Naive thymus-derived CD4-positive, alpha-beta T cell (primary cell): ENCODE measurements at regions of chr6 and their contacts with region 1.

Region 1: DNA sequence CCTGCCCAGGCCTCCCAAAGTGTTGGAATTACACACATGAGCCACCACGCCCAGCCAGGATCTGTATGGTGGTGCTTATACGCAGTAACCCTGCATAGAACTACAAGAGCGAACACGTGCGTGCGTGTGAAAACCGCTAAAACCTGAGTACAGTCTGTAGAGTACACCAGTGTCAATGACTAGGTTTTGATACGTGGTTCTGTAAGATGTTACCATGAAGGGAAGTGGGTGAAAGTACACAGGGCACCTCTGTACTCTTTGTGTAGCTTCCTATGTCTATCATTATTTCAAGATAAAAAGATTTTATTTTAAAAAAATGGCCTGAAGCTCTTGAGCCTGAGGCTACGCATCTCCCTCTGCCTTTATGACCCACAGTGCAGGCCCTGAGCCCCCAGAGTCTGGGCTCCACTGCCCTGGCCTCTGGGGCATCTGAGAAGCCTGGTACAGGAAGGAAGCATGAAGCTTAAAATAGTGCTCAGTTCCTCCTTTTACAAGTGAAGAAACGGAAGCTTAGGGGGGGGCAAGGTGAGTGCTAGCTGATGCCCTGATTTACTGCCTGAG is 21.6 kb downstream of the LY86 start:
- DNase-seq: peak in 7 of 9 donors; percentile 70 to 88 (median 81)
- ATAC-seq: peak; percentile 84
- H3K4me3 ChIP-seq: peak overlapping the region; percentile 25
- H3K4me3 Mint-ChIP-seq: peak overlapping the region; percentile 29 to 83 (median 72)
- H3K27ac ChIP-seq: peak overlapping the region; percentile 65
- H3K27ac Mint-ChIP-seq: peak overlapping the region; percentile 81 to 100 (median 96)
- H3K4me1 ChIP-seq: peaks cover 51 to 61% of the 10 kb centered on the region in 2 donors
- H3K4me1 Mint-ChIP-seq: peaks cover 45 to 86% (median 68%) of the 10 kb centered on the region in 7 donors
- H3K27me3 ChIP-seq: no peaks in the 10 kb centered on the region
- H3K27me3 Mint-ChIP-seq: no peaks in the 10 kb centered on the region

Region 2: DNA sequence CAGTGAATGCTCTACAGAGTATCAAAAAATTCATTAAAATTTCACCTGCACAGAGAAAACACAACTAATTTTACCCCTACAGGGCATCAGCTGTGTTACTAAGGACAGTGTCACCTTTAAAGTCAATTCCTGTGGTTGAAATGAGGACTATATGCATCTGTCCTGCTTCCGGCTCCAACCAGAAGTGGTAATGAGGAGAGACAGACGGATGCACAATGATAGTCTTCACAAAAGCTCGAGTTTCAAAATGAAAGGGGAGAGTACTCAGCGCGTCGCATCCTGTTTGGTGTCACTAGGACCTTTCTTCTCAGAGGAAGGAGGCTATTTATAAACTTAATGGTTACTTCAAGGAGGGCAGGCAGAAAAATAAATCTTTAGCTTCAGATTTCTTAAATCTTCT is 1435.9 kb before region 1 on chr6:
- CTCF ChIA-PET with region 1: no interaction called
- POLR2A ChIA-PET with region 1: no interaction called
- intact Hi-C with region 1: loop called in 1 of 2 experiments (anchors 1 kb)
- DNase-seq: peak in 8 of 9 donors; percentile 34 to 79 (median 71)
- ATAC-seq: peak; percentile 93
- H3K4me3 ChIP-seq: peak overlapping the region; percentile 46
- H3K4me3 Mint-ChIP-seq: peak overlapping the region; percentile 18 to 86 (median 78)
- H3K27ac ChIP-seq: peak overlapping the region; percentile 67
- H3K27ac Mint-ChIP-seq: peak overlapping the region; percentile 79 to 96 (median 92)
- H3K4me1 ChIP-seq: peaks cover 23 to 38% of the 10 kb centered on the region in 2 donors
- H3K4me1 Mint-ChIP-seq: peaks cover 31 to 75% (median 64%) of the 10 kb centered on the region in 7 donors
- H3K27me3 ChIP-seq: no peaks in the 10 kb centered on the region
- H3K27me3 Mint-ChIP-seq: no peaks in the 10 kb centered on the region

Region 3: DNA sequence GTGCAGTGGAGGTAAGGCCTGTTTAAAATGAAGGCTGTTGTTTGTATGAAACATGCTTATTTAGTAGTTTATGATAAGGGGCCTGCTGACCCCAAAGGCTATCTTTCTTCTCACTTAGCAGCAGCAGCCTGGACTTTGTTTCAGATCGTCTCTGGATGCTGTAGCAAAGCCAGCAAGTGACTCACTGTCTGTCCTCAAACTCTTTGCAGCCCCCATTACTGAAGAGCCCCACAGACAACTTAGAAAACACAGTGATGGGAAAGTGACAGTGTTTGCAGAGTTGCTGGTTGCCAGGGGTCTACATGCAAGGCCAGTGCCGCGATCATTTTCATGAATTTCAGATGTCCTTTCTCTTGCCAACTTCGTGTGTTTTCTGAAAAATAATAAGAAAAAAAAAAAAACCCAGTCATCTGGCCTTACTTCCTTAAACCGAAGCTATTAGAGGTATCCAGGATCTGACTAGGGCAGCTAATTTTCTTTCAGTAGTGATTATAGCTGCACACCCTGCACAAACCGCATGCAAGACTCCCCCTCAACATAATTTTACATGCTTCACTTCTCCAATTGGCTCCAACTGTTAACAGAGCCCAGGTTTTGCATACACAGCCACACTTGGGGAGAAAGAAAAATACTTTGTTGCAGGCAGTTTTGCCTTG is 278.0 kb before region 1 on chr6:
- CTCF ChIA-PET with region 1: no interaction called
- POLR2A ChIA-PET with region 1: no interaction called
- intact Hi-C with region 1: no loop called
- DNase-seq: no peak
- ATAC-seq: peak; percentile 45
- H3K4me3 ChIP-seq: no peak overlapping the region
- H3K4me3 Mint-ChIP-seq: no peak overlapping the region
- H3K27ac ChIP-seq: no peak overlapping the region
- H3K27ac Mint-ChIP-seq: no peak overlapping the region
- H3K4me1 ChIP-seq: no peaks in the 10 kb centered on the region
- H3K4me1 Mint-ChIP-seq: peaks cover 0 to 15% (median 9%) of the 10 kb centered on the region in 7 donors
- H3K27me3 ChIP-seq: no peaks in the 10 kb centered on the region
- H3K27me3 Mint-ChIP-seq: peaks cover 0 to 22% (median 6%) of the 10 kb centered on the region in 5 donors

Region 4: GRCh38 chr6:6588064-6588923 is 21.8 kb before region 1 on chr6 and contains the start of gene LY86:
- CTCF ChIA-PET with region 1: interaction called, 10 read pairs
- POLR2A ChIA-PET with region 1: interaction called, 35 read pairs
- intact Hi-C with region 1: loop called (anchors 1 kb)
- DNase-seq: peak in 6 of 9 donors; percentile 34 to 64 (median 58)
- ATAC-seq: peak; percentile 46
- H3K4me3 ChIP-seq: peak within 1 kb of the TSS; percentile 31
- H3K4me3 Mint-ChIP-seq: peak within 1 kb of the TSS; percentile 74 to 87 (median 79)
- H3K27ac ChIP-seq: peak within 1 kb of the TSS; percentile 72
- H3K27ac Mint-ChIP-seq: peak within 1 kb of the TSS; percentile 81 to 97 (median 94)
- H3K4me1 ChIP-seq: peaks cover 13 to 53% of the 10 kb centered on the region in 2 donors
- H3K4me1 Mint-ChIP-seq: peaks cover 54 to 90% (median 85%) of the 10 kb centered on the region in 7 donors
- H3K27me3 ChIP-seq: no peaks in the 10 kb centered on the region
- H3K27me3 Mint-ChIP-seq: peaks cover 0 to 5% (median 0%) of the 10 kb centered on the region in 5 donors
- total RNA-seq, gene LY86: 1.5 to 19.6 (median 4.5) TPM

Region 5: DNA sequence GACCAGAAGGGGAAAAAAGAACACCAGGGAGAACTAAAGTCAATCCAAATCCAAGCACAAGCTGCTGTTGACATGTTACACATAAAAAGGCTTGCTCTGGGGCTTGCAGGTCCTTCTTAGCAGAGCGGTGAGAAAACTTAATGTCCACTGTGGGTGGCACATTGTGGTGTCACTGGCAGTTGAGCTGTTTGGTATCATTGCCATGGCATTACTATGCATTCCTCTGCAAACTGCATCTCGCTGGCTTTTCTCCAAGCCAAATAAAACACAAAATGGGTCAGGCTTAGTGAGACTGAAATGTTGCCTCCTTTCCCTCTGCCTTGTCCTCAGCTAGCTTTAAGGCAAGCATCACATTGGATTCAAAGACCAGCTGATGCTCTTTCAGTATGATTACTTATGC is 19.3 kb after region 1 on chr6:
- CTCF ChIA-PET with region 1: interaction called, 7 read pairs
- POLR2A ChIA-PET with region 1: interaction called, 8 read pairs
- intact Hi-C with region 1: loop called in 1 of 2 experiments (anchors 2 kb)
- DNase-seq: no peak
- ATAC-seq: no peak
- H3K4me3 ChIP-seq: no peak overlapping the region
- H3K4me3 Mint-ChIP-seq: no peak overlapping the region
- H3K27ac ChIP-seq: no peak overlapping the region
- H3K27ac Mint-ChIP-seq: no peak overlapping the region
- H3K4me1 ChIP-seq: peaks cover 0 to 5% of the 10 kb centered on the region in 2 donors
- H3K4me1 Mint-ChIP-seq: peaks cover 8 to 39% (median 26%) of the 10 kb centered on the region in 7 donors
- H3K27me3 ChIP-seq: no peaks in the 10 kb centered on the region
- H3K27me3 Mint-ChIP-seq: peaks cover 0 to 5% (median 0%) of the 10 kb centered on the region in 5 donors

Region 6: GRCh38 chr6:6654599-6655575 is 44.8 kb after region 1 on chr6:
- CTCF ChIA-PET with region 1: interaction called, 3 read pairs
- POLR2A ChIA-PET with region 1: interaction called, 46 read pairs
- intact Hi-C with region 1: loop called (anchors 1 kb)
- DNase-seq: peak in 8 of 9 donors; percentile 25 to 77 (median 60)
- ATAC-seq: peak; percentile 62
- H3K4me3 ChIP-seq: no peak overlapping the region
- H3K4me3 Mint-ChIP-seq: peak overlapping the region; percentile 60 to 85 (median 76)
- H3K27ac ChIP-seq: peak overlapping the region; percentile 45
- H3K27ac Mint-ChIP-seq: peak overlapping the region; percentile 65 to 99 (median 97)
- H3K4me1 ChIP-seq: peaks cover 4 to 67% of the 10 kb centered on the region in 2 donors
- H3K4me1 Mint-ChIP-seq: peaks cover 48 to 94% (median 82%) of the 10 kb centered on the region in 7 donors
- H3K27me3 ChIP-seq: no peaks in the 10 kb centered on the region
- H3K27me3 Mint-ChIP-seq: no peaks in the 10 kb centered on the region

Region 7: GRCh38 chr6:6676910-6677441 is 66.9 kb after region 1 on chr6:
- CTCF ChIA-PET with region 1: interaction called, 7 read pairs
- POLR2A ChIA-PET with region 1: no interaction called
- intact Hi-C with region 1: loop called in 1 of 2 experiments (anchors 1 kb)
- DNase-seq: peak; percentile 57 to 88 (median 77)
- ATAC-seq: peak; percentile 93
- H3K4me3 ChIP-seq: no peak overlapping the region
- H3K4me3 Mint-ChIP-seq: peak overlapping the region in 8 of 10 donors; percentile 0 to 73 (median 43)
- H3K27ac ChIP-seq: no peak overlapping the region
- H3K27ac Mint-ChIP-seq: peak overlapping the region in 6 of 9 donors; percentile 28 to 95 (median 80)
- H3K4me1 ChIP-seq: peaks cover 0 to 6% of the 10 kb centered on the region in 2 donors
- H3K4me1 Mint-ChIP-seq: peaks cover 4 to 41% (median 11%) of the 10 kb centered on the region in 7 donors
- H3K27me3 ChIP-seq: no peaks in the 10 kb centered on the region
- H3K27me3 Mint-ChIP-seq: peaks cover 0 to 5% (median 0%) of the 10 kb centered on the region in 5 donors